ENCODE measurements at regions of chr20 and their contacts with region 1.

Region 1: GRCh38 chr20:39429716-39430115 is 467.6 kb downstream of the DHX35 start:
- DNase-seq: no peak
- ATAC-seq: no peak
- H3K4me3 ChIP-seq: no peak overlapping the region
- H3K4me3 Mint-ChIP-seq: no peak overlapping the region
- H3K27ac ChIP-seq: no peak overlapping the region
- H3K27ac Mint-ChIP-seq: no peak overlapping the region
- H3K4me1 ChIP-seq: no peaks in the 10 kb centered on the region
- H3K4me1 Mint-ChIP-seq: no peaks in the 10 kb centered on the region
- H3K27me3 ChIP-seq: no peaks in the 10 kb centered on the region
- H3K27me3 Mint-ChIP-seq: no peaks in the 10 kb centered on the region
- CTCF ChIP-seq: no peak

Region 2: DNA sequence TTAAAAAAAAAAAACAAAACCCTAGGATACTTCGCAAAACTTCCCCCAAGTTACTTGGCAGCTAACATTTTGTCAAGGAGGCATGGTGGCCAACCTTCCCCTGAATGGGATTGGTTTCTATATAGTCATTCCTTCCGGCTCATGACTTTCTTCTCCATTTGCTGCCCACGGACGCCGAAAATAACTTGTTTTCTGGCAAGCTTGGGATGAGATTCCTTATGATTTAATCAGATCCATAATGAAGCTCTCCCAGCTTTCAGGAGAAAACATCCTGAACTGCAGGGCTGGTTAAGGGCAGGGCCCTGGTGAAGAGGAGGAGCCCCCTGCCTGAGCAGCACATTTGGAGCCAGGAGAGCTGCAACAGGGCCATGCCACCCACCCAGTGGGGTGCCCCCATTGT is 574.4 kb before region 1 on chr20:
- CTCF ChIA-PET with region 1: no interaction called
- POLR2A ChIA-PET with region 1: no interaction called
- intact Hi-C with region 1: no loop called
- DNase-seq: no peak
- ATAC-seq: no peak
- H3K4me3 ChIP-seq: no peak overlapping the region
- H3K4me3 Mint-ChIP-seq: no peak overlapping the region
- H3K27ac ChIP-seq: no peak overlapping the region
- H3K27ac Mint-ChIP-seq: no peak overlapping the region
- H3K4me1 ChIP-seq: peaks cover 50% of the 10 kb centered on the region
- H3K4me1 Mint-ChIP-seq: peaks cover 82% of the 10 kb centered on the region
- H3K27me3 ChIP-seq: no peaks in the 10 kb centered on the region
- H3K27me3 Mint-ChIP-seq: no peaks in the 10 kb centered on the region
- CTCF ChIP-seq: no peak

Region 3: GRCh38 chr20:39412091-39412490 is 17.6 kb before region 1 on chr20:
- CTCF ChIA-PET with region 1: no interaction called
- POLR2A ChIA-PET with region 1: no interaction called
- intact Hi-C with region 1: loop called in 1 of 2 experiments (anchors 2 kb)
- DNase-seq: no peak
- ATAC-seq: no peak
- H3K4me3 ChIP-seq: no peak overlapping the region
- H3K4me3 Mint-ChIP-seq: no peak overlapping the region
- H3K27ac ChIP-seq: no peak overlapping the region
- H3K27ac Mint-ChIP-seq: no peak overlapping the region
- H3K4me1 ChIP-seq: no peaks in the 10 kb centered on the region
- H3K4me1 Mint-ChIP-seq: no peaks in the 10 kb centered on the region
- H3K27me3 ChIP-seq: no peaks in the 10 kb centered on the region
- H3K27me3 Mint-ChIP-seq: no peaks in the 10 kb centered on the region
- CTCF ChIP-seq: no peak

Region 4: DNA sequence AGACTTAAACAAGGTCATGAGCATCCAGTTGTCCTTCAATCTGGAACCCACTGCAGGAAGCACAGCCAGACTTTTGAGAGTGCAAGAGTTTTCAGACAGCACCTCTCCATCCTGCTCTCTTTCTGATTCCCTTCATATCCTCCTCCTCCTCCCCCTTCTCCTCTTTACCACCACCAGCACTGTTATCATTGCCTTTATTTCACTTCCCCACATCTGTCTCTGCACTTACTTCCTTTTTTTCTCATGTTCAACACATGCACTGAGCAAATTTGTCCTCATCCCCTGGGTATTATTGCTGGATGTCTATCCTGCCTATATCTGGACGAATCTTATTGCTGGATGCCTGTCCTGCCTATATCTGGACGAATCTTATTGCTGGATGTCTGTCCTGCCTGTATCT is 87.2 kb after region 1 on chr20:
- CTCF ChIA-PET with region 1: no interaction called
- POLR2A ChIA-PET with region 1: no interaction called
- intact Hi-C with region 1: no loop called
- DNase-seq: no peak
- ATAC-seq: no peak
- H3K4me3 ChIP-seq: no peak overlapping the region
- H3K4me3 Mint-ChIP-seq: no peak overlapping the region
- H3K27ac ChIP-seq: no peak overlapping the region
- H3K27ac Mint-ChIP-seq: no peak overlapping the region
- H3K4me1 ChIP-seq: no peaks in the 10 kb centered on the region
- H3K4me1 Mint-ChIP-seq: no peaks in the 10 kb centered on the region
- H3K27me3 ChIP-seq: no peaks in the 10 kb centered on the region
- H3K27me3 Mint-ChIP-seq: no peaks in the 10 kb centered on the region
- CTCF ChIP-seq: no peak